Mucosa of descending colon (tissue), 3 donors: ENCODE measurements at regions of chr22 and their contacts with region 1.

Region 1: DNA sequence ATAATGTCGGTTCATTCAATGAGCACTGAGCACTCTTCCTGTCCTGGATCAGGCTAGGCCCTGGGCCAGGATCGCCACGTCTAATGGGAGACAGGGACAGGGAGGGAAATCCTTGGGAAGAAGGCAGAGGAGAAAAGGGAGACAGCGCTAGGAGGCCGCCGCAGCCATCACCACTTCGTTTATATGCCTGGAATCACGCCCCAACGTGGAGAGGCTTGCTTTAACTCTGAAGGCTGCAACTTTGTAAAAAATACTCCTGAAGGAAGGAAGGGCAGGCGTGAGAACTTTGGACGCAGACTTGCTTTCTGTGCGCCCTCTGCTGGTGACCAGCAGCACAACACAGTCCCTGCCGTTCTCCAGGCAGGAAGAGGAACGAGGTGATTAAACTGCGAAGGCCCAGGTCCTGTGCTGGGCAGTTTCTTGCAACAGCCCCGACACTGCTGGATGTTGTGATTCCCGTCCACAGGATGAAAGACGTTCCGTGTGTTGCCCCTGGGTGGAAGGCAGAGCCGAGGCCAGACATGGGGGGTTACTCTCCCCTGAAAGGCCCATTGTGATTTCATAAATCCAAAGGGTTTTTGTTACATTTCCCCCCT is 22.1 kb downstream of the RIBC2 start:
- DNase-seq: peak; percentile 87 to 94 (median 93)
- ATAC-seq: peak; percentile 99
- H3K4me3 ChIP-seq: no peak overlapping the region
- H3K4me1 ChIP-seq: no peaks in the 10 kb centered on the region
- CTCF ChIP-seq: peak; percentile 99

Region 2: GRCh38 chr22:45240810-45241631 is 194.6 kb before region 1 on chr22 and contains the start of gene KIAA0930:
- intact Hi-C with region 1: no loop called
- DNase-seq: peak; percentile 85 to 93 (median 90)
- ATAC-seq: peak; percentile 82
- H3K4me3 ChIP-seq: peak within 1 kb of the TSS; percentile 36
- H3K4me1 ChIP-seq: peaks cover 31% of the 10 kb centered on the region
- CTCF ChIP-seq: no peak
- total RNA-seq, gene KIAA0930: 32.7 to 62.4 (median 37.7) TPM

Region 3: DNA sequence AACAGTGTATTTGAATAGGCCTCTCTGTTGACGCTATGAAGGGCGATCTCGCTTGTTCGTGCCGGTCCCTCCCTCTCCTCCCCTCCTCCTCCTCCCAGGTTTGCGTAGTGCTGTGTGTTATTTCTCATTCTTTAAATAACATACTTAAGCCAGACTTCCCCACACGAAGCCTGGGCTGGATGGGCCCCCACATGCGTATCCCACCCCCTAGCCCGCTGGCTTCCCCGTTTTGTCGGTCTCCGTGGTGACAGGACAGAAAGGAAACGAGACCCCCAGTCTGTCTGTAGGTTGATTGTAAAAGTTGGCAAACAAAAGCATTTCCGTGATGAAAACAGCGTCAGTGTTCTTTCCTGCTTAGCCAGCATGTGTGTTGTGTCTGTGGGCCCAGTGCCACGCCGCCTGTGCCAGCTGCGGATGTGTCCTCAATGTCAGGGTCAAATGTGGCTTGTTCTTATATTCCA is 98.6 kb before region 1 on chr22:
- intact Hi-C with region 1: loop called in 1 of 2 experiments (anchors 10 kb)
- DNase-seq: peak; percentile 58 to 68 (median 60)
- ATAC-seq: peak; percentile 79
- H3K4me3 ChIP-seq: no peak overlapping the region
- H3K4me1 ChIP-seq: no peaks in the 10 kb centered on the region
- CTCF ChIP-seq: no peak

Region 4: GRCh38 chr22:45537734-45538181 is 102.1 kb after region 1 on chr22:
- intact Hi-C with region 1: no loop called
- DNase-seq: peak; percentile 30 to 74 (median 55)
- ATAC-seq: peak; percentile 36
- H3K4me3 ChIP-seq: no peak overlapping the region
- H3K4me1 ChIP-seq: peaks cover 2% of the 10 kb centered on the region
- CTCF ChIP-seq: no peak

Region 5: DNA sequence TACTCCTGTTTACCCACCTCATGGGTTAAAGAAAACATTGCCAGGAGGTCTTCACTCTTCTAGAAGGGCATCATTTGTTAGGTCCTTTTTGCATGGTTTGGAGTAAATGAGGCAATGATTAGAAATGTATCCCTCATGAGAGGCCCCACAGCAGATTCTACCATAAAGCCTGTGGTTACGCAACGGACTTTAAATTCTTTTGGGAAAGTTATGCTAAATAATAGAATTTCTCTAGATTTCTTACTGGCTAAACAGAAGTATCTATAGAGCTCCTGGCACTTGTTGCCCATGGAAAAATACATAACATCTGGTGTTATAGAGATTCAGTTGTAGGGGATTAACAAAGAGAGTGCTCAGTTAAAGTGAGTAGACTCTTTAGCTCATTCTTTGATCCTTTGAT is 220.9 kb after region 1 on chr22:
- intact Hi-C with region 1: no loop called
- DNase-seq: no peak
- ATAC-seq: no peak
- H3K4me3 ChIP-seq: no peak overlapping the region
- H3K4me1 ChIP-seq: no peaks in the 10 kb centered on the region
- CTCF ChIP-seq: no peak